Left colon (tissue), 2 donors: ENCODE measurements at regions of chr11 and their contacts with region 1.

Region 1: DNA sequence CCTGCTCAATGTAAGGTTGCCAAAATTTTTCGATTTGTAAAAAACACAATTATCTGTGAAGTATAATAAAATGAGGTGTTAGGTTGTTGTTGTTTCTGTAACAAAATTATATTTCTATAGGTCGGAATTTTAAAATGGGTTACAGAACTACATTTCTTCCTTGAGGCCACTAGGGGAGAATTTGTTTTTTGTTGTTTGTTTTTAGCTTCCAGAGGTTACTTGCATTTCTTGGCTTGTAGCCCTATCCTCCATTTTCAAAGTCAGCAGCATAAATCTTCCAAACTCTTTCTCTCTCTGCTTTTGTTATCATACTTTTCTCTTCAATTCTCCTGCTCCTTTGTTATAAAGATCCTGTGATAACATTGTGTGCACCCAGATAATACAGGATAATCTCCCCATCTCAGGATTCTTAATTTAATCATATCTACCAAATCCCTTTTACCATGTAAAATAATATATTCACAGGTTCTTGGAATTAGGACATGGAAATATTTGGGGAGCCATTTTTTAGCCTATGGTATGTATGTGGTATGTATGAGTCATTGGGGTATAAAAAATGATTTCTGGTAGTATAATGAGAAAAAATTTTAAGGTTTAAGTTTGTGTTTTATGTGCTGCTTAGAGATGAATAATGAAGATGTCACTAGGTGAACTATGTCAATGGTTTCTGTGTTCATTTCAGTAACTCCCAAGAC is 9.4 kb upstream of the PATL1 start:
- DNase-seq: no peak
- ATAC-seq: no peak

Region 2: DNA sequence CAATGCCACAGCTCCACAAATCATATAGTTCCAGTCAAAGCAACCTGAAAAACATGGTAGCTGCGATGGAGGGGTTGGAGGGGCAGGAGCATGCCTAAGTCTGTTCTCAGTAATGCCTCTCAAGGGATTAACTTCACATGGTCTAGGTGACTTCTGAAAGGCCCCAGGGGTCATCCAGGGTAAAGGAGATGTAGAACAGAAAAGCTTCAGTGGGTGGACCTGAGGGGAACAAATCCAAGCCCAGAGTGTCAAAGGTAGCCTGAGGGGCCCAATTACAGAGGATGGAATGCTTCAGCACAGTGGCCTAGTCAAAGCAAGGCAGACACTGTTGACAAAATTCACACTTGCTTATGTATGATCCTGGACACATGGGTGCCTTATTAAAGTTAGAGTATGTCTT is 143.6 kb before region 1 on chr11:
- intact Hi-C with region 1: loop called in 1 of 2 experiments (anchors 5 kb)
- DNase-seq: no peak
- ATAC-seq: no peak

Region 3: GRCh38 chr11:59849129-59849528 is 170.9 kb after region 1 on chr11:
- intact Hi-C with region 1: no loop called
- DNase-seq: peak; percentile 57 to 73
- ATAC-seq: peak; percentile 96